Panc1 (cell line): ENCODE measurements at regions of chr20 and their contacts with region 1.

Region 1: DNA sequence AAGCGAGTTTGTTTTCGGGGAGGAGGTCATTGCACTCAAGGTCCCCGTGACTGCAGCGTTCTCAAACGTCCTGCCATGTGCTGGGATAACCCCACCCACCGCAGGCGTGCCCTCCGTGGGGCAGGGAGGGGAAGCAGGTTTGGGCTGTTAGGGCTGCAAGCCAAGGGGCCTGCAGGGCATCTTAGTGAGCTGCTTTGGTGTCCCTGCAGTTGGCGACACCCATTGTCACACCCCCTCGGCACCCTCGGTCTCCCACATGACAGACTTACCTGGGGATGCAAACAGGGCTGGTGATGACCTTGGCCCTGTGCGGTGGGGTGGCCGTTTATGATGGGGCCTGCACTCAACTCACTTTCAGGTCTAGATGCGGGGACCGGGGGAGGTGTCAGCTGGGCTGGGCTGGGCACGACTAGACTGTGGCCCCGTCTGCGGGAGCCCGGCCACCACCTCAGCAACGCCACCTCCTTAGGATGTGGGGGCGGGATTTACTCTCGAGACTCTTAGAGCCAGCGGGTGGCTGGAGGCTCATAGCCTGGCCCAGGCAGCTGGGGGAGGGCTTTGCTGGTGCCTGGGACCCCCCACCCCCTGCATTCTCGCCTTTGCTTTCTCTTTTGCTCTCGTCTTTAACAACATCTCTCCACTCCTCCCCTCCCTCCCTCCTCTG is 6.5 kb upstream of the GATA5 start:
- DNase-seq: no peak
- ATAC-seq: peak; percentile 12; the same call in 1 of the 2 replicates
- H3K4me3 ChIP-seq: peak overlapping the region in 1 of 2 experiments; percentile 7; a peak in 1 of 4 replicates
- H3K27ac ChIP-seq: peak overlapping the region; percentile 88
- H3K4me1 ChIP-seq: peaks cover 87% of the 10 kb centered on the region
- H3K27me3 ChIP-seq: no peaks in the 10 kb centered on the region
- CTCF ChIP-seq: no peak

Region 2: DNA sequence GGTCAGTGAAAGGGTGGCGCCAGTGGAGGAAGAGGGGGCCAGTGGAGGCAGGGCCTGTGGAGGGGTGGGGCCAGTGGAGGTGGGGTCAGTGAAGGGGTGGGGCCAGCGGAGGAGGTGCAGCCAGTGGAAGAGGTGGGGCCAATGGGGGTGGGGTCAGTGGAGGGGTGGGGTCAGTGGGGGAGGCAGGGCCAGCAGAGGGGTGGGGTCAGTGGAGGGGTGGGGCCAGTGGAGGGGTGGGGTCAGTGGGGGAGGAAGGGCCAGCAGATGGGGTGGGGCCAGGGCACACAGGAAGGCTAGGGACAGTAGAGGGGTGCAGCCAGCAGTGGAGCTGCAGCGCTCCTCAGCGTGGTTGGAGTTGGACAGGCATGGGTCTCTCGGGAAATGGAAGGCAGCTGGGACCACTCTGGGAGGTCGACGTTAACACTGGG is 160.7 kb before region 1 on chr20:
- CTCF ChIA-PET with region 1: no interaction called
- POLR2A ChIA-PET with region 1: no interaction called
- in situ Hi-C with region 1: no loop called
- intact Hi-C with region 1: no loop called
- DNase-seq: no peak
- ATAC-seq: peak; percentile 24; the same call in 1 of the 2 replicates
- H3K4me3 ChIP-seq: no peak overlapping the region
- H3K27ac ChIP-seq: no peak overlapping the region
- H3K4me1 ChIP-seq: peaks cover 4% of the 10 kb centered on the region; the same call in 1 of the 2 replicates
- H3K27me3 ChIP-seq: no peaks in the 10 kb centered on the region
- CTCF ChIP-seq: no peak

Region 3: DNA sequence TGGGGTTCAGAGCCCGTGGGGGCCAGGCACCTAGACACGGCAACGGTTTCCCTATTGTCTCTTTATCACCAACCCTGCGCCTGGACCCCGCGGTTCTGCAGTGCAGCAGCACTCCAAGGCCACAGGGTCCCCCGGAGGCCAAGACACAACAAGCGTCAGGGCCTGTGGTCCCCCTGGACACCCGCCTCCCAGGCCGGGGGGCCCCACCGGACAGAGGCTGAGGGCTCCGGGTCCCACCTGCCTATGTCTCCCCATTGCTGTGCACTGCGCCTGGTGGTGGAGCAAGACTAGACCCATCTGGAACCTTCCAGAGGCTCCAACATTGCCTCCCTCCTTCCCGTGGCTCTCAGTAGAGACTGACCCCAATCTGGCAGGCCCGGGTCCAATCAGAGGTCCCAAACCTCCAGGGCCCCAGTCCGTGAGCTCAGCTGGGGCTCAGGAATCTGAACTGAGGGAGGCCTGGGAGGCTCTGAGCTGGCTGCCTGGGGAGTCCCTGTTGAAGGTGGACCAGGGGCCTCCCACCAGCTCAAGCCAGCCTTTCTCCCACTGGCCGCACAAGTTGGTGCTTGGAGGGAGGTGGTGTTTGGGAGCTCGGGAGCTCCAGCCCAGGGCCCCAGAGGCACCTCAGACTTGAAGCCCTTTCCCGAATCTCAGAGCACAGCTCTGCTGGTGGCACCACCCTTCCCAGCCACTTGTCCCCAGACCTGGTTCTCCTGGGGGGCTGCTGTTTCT is 15.3 kb before region 1 on chr20:
- CTCF ChIA-PET with region 1: no interaction called
- POLR2A ChIA-PET with region 1: no interaction called
- in situ Hi-C with region 1: no loop called
- intact Hi-C with region 1: no loop called
- DNase-seq: no peak
- ATAC-seq: peak; percentile 30
- H3K4me3 ChIP-seq: no peak overlapping the region
- H3K27ac ChIP-seq: no peak overlapping the region
- H3K4me1 ChIP-seq: peaks cover 37% of the 10 kb centered on the region
- H3K27me3 ChIP-seq: no peaks in the 10 kb centered on the region
- CTCF ChIP-seq: no peak

Region 4: GRCh38 chr20:62623488-62624324 is 141.4 kb after region 1 on chr20:
- CTCF ChIA-PET with region 1: no interaction called
- POLR2A ChIA-PET with region 1: interaction called, 14 read pairs
- in situ Hi-C with region 1: no loop called
- intact Hi-C with region 1: no loop called
- DNase-seq: peak; percentile 72
- ATAC-seq: peak; percentile 79
- H3K4me3 ChIP-seq: peak overlapping the region in 1 of 2 experiments; percentile 28; a peak in 2 of 4 replicates
- H3K27ac ChIP-seq: peak overlapping the region; percentile 89
- H3K4me1 ChIP-seq: peaks cover 72% of the 10 kb centered on the region
- H3K27me3 ChIP-seq: no peaks in the 10 kb centered on the region
- CTCF ChIP-seq: no peak